Activated T-helper 1 cell treated with anti-CD3 and anti-CD28 coated beads, Interleukin-12 subunit alpha, Interleukin-12 subunit beta, Interleukin-2, Interleukin-4 antibody, amounts not matched to agents 30 ng/mL and 10 ng/mL and 1 ng/mL, durations not matched to agents 14 hours and 24 hours and 36 hours (primary cell): ENCODE measurements at regions of chr1 and their contacts with region 1.

Region 1: DNA sequence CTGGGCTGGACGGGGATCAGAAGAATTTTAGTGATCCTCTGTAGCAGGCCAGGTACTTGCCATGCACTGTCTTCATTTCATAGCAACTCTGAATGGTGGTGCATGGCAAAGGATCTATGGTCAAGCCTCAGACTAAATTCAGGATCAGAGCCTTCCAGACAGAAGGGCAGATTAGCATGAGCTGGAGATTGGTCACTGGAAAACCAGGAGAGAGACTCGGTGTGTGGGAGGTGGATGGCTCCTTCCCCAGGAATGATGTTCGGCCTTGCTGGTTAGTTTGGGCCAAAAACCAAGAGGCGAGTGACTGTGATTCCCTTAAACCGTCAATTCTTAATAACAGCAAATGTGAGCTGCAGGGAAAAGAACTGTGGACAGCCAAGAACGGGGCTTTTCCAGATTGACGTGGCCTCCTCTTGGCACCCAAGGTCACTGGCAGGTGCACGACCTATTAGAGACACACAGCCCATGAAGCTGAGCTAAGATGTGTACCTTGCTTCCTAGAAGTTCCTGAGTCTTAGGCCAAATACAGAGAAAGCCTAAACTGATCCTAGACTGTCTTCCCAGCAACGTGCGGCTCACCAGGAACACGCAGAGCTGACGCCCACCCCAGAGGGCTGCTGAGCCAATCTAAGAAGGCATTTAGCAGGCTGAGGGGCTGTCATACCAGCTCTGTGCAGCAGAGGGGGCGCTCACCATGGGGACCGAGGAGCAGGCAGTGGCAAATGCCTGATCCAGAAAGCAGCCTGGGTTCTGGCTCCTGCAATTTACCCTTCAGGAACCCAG is 18.5 kb downstream of the ALDH4A1 start:
- DNase-seq: peak; percentile 49
- H3K4me3 Mint-ChIP-seq: no peak overlapping the region
- H3K27ac Mint-ChIP-seq: no peak overlapping the region
- H3K4me1 Mint-ChIP-seq: no peaks in the 10 kb centered on the region
- H3K27me3 Mint-ChIP-seq: no peaks in the 10 kb centered on the region

Region 2: DNA sequence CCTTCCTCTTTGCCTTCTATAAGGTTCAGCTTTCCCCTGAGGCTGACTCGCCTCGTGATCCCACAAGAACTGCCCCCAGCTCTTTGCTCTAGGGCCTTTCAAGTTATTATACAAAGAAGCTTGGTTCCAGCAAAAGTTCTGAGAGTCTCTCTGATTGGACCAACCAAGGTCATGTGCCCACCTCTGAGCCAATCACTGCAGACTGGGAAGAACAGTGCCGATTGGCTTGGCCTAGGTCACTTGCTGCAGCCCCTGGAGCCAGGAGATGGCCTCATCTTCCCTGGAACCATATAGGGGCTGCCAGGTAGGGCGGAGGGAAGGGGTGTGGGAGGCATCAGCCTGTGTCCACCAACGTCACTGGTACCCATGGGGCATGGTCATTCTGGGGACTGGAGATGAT is 47.2 kb before region 1 on chr1:
- intact Hi-C with region 1: no loop called
- DNase-seq: no peak
- H3K4me3 Mint-ChIP-seq: no peak overlapping the region
- H3K27ac Mint-ChIP-seq: no peak overlapping the region
- H3K4me1 Mint-ChIP-seq: no peaks in the 10 kb centered on the region
- H3K27me3 Mint-ChIP-seq: no peaks in the 10 kb centered on the region

Region 3: GRCh38 chr1:18972531-18972930 is 88.7 kb after region 1 on chr1:
- intact Hi-C with region 1: loop called (anchors 1 kb)
- DNase-seq: no peak
- H3K4me3 Mint-ChIP-seq: no peak overlapping the region
- H3K27ac Mint-ChIP-seq: no peak overlapping the region
- H3K4me1 Mint-ChIP-seq: no peaks in the 10 kb centered on the region
- H3K27me3 Mint-ChIP-seq: peaks cover 21% of the 10 kb centered on the region

Region 4: DNA sequence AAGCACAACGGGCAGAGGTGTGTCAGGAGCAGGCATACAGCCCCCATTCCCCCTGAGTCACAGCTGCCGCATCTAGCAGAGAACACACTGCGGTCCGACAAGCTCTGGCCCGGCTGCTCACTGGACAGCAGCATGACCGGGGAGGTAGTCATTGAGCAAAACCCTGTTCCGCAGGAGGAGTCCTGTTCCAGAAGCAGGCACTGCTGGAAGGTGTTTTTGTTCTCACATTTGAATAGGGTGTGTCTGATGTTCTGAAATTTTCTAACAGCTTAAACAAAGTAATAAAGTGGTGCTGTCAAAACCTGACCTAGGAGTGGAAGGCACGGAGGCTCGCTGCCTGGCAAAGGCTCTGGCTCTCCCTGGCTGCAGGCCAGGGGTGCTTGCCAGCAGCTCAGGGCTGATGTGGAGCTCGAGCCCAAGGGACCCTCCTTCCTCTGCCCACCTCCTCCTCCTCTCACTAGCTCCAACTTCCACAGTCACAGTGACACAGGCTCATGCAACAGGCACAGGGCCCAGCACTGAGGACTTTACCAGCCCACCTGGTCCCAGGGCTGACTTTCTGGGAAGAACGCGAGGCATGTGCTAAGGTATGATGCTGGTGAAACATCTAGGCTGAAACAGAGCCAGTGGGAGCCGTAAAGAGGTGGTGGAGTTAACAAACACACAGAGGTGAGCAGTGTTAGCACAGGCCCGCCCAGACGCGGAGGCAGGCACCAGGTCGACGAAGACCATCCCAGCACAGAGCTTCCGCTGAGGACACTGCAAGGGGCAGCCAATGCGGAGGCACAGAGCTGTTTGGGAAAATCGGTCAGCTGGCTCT is 191.3 kb after region 1 on chr1:
- intact Hi-C with region 1: loop called (anchors 1 kb)
- DNase-seq: no peak
- H3K4me3 Mint-ChIP-seq: peak overlapping the region; percentile 53
- H3K27ac Mint-ChIP-seq: peak overlapping the region; percentile 61
- H3K4me1 Mint-ChIP-seq: peaks cover 34% of the 10 kb centered on the region
- H3K27me3 Mint-ChIP-seq: peaks cover 4% of the 10 kb centered on the region

Region 5: DNA sequence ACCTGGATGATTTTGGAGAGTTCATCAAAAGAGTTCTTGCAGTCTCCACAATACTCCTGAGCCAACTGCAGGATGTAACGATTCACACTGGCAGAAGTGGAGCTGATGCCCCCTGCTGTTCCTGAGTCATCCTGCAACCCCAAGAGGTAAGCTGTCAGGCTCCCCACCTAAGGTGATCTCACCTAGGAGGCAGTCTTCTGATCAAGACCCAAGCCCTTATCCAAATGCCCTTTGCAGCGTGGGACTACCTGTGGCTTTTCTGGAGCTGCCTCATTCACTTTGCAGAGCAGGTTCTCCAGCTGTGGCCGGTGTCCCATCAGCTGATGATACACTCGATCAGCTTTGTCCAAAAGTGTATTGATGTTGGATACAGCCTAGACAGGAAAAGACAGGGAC is 229.9 kb after region 1 on chr1:
- intact Hi-C with region 1: loop called (anchors 1 kb)
- DNase-seq: peak; percentile 14
- H3K4me3 Mint-ChIP-seq: no peak overlapping the region
- H3K27ac Mint-ChIP-seq: no peak overlapping the region
- H3K4me1 Mint-ChIP-seq: no peaks in the 10 kb centered on the region
- H3K27me3 Mint-ChIP-seq: no peaks in the 10 kb centered on the region

Region 6: DNA sequence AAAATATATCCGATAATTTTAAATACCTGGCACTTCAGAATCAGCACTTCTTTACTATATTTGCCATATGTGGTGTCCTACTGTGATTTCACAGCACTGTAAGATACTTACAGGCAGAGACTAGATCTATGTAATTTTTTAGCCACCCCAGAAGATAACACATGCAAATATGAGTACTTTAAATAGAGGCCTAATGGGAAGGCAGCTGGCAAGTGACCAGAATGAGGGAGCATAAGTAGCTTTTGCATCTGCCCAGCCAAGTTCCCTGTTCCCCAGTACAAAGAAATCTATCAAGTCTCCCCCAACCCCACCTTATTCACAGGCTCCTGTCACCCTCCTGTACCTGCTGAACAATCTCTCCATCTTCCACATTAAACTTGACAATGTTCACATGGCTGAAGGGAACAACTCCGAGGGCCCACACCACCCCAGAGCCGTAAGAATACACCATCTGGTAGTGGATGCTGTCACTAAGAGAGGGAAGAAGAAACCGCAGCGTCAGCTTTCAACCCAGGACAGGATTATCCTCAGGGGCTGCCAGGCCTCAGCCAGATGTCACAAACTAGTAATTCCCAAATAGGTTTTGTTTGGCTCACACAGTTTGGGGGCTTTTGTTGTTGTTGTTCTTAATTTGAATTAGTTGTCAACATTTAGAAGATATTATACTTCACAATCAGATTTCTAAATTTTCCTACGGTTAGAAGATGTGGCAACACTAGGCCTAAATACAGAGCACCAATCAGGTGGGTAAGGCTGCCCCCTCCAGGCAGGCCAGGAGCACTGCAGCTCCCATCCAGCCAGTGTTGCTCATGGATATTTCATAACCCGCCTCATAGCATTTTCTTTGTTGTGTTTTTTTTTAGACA is 357.1 kb after region 1 on chr1:
- intact Hi-C with region 1: loop called (anchors 1 kb)
- DNase-seq: peak; percentile 54
- H3K4me3 Mint-ChIP-seq: no peak overlapping the region
- H3K27ac Mint-ChIP-seq: no peak overlapping the region
- H3K4me1 Mint-ChIP-seq: no peaks in the 10 kb centered on the region
- H3K27me3 Mint-ChIP-seq: no peaks in the 10 kb centered on the region